ENCODE measurements at regions of chr15 and their contacts with region 1.

Region 1: DNA sequence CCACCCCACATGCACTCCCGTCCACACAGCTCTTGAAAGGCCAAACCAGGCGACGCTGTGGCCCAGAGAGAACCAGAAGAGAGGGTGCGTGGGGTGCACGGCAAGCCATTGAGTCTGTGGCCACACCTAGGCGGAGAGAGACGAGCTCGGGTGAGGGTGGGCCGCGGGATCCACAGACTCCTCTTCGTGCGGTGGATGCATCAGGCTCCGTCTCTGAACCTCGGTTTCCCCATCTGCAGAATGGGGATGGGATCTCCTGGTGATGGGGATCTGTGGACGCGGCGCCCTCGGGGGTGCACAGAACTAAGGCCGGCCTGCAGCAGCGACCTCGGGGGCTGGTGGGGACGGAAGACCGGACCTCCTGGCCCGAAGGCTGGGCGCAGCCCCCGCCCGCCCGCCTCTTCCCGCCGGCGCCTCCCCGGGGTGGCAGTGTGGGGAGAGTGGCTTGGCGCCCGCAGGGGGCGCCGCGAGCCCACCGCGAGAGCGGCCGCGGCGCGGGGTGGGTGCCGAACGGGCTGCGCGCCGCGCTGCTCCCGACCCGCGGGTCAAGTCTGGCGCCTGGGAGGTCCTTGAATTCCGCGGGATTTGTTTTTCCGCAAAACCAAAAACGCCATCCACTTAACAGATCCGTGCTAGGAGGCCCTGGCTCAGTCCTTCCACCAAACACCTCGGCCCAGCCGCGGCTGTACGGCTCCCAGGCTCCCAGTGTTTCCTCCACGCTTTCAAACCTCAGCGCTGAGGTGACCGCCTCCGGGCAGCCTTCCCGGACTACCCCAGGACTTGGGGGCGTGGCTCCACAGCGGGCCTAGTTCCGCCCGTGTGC is 13.2 kb upstream of the ADPGK start:
- DNase-seq: peak in 7 of 9 donors; percentile 12 to 44 (median 25)
- ATAC-seq: peak; percentile 84
- H3K4me3 ChIP-seq: peak overlapping the region; percentile 61
- H3K4me3 Mint-ChIP-seq: peak overlapping the region; percentile 75 to 90 (median 81)
- H3K27ac ChIP-seq: no peak overlapping the region
- H3K27ac Mint-ChIP-seq: peak overlapping the region in 3 of 9 donors; percentile 46 to 81 (median 67)
- H3K4me1 ChIP-seq: peaks cover 0 to 8% of the 10 kb centered on the region in 2 donors
- H3K4me1 Mint-ChIP-seq: peaks cover 0 to 14% (median 10%) of the 10 kb centered on the region in 7 donors
- H3K27me3 ChIP-seq: no peaks in the 10 kb centered on the region
- H3K27me3 Mint-ChIP-seq: peaks cover 32 to 38% (median 35%) of the 10 kb centered on the region in 5 donors

Region 2: GRCh38 chr15:72732086-72732485 is 64.6 kb before region 1 on chr15:
- CTCF ChIA-PET with region 1: no interaction called
- POLR2A ChIA-PET with region 1: no interaction called
- intact Hi-C with region 1: no loop called
- DNase-seq: no peak
- ATAC-seq: no peak
- H3K4me3 ChIP-seq: no peak overlapping the region
- H3K4me3 Mint-ChIP-seq: no peak overlapping the region
- H3K27ac ChIP-seq: no peak overlapping the region
- H3K27ac Mint-ChIP-seq: peak overlapping the region in 2 of 9 donors; percentile 3 to 65
- H3K4me1 ChIP-seq: no peaks in the 10 kb centered on the region
- H3K4me1 Mint-ChIP-seq: peaks cover 0 to 17% (median 7%) of the 10 kb centered on the region in 7 donors
- H3K27me3 ChIP-seq: no peaks in the 10 kb centered on the region
- H3K27me3 Mint-ChIP-seq: no peaks in the 10 kb centered on the region

Region 3: GRCh38 chr15:72961346-72961745 is 164.6 kb after region 1 on chr15:
- CTCF ChIA-PET with region 1: no interaction called
- POLR2A ChIA-PET with region 1: no interaction called
- intact Hi-C with region 1: no loop called
- DNase-seq: no peak
- ATAC-seq: no peak
- H3K4me3 ChIP-seq: no peak overlapping the region
- H3K4me3 Mint-ChIP-seq: no peak overlapping the region
- H3K27ac ChIP-seq: no peak overlapping the region
- H3K27ac Mint-ChIP-seq: no peak overlapping the region
- H3K4me1 ChIP-seq: peaks cover 0 to 9% of the 10 kb centered on the region in 2 donors
- H3K4me1 Mint-ChIP-seq: peaks cover 0 to 26% (median 0%) of the 10 kb centered on the region in 7 donors
- H3K27me3 ChIP-seq: no peaks in the 10 kb centered on the region
- H3K27me3 Mint-ChIP-seq: peaks cover 9 to 22% (median 19%) of the 10 kb centered on the region in 5 donors

Region 4: DNA sequence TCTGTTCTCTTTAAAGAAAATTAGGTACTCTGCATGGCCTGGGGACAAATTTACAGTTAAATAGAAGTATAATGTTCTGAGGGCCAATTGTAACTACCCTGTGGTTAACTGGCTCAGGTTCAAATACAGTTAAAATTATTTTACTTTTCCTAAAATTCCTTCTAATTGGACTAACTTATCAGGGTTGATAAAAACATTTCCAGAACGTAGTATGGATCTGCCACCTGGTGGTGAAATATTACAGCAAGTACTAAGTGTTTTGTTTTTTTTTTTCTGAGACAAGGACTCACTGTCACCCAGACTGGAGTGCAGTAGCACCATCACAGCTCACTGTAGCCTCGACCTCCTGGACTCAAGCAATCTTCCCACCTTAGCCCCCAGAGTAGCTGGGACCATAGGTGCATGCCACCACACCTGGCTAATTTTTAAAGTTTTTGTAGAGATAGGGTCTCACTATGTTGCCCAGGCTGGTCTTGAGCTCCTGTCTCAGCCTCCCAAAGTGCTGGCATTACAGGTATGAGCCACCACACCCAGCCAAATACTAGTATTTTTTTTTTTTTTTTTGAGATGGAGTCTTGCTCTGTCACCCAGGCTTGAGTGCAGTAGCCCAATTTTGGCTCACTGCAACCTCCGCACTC is 284.7 kb after region 1 on chr15:
- CTCF ChIA-PET with region 1: no interaction called
- POLR2A ChIA-PET with region 1: no interaction called
- intact Hi-C with region 1: loop called (anchors 1 kb)
- DNase-seq: peak in 7 of 9 donors; percentile 16 to 56 (median 38)
- ATAC-seq: peak; percentile 63
- H3K4me3 ChIP-seq: no peak overlapping the region
- H3K4me3 Mint-ChIP-seq: no peak overlapping the region
- H3K27ac ChIP-seq: no peak overlapping the region
- H3K27ac Mint-ChIP-seq: no peak overlapping the region
- H3K4me1 ChIP-seq: no peaks in the 10 kb centered on the region
- H3K4me1 Mint-ChIP-seq: peaks cover 0 to 3% (median 0%) of the 10 kb centered on the region in 7 donors
- H3K27me3 ChIP-seq: no peaks in the 10 kb centered on the region
- H3K27me3 Mint-ChIP-seq: peaks cover 0 to 7% (median 0%) of the 10 kb centered on the region in 5 donors

Region 5: GRCh38 chr15:73273181-73274002 is 476.7 kb after region 1 on chr15:
- CTCF ChIA-PET with region 1: no interaction called
- POLR2A ChIA-PET with region 1: no interaction called
- intact Hi-C with region 1: loop called in 1 of 2 experiments (anchors 2 kb)
- DNase-seq: peak in 7 of 9 donors; percentile 3 to 44 (median 32)
- ATAC-seq: peak; percentile 71
- H3K4me3 ChIP-seq: no peak overlapping the region
- H3K4me3 Mint-ChIP-seq: peak overlapping the region in 4 of 10 donors; percentile 4 to 63 (median 26)
- H3K27ac ChIP-seq: no peak overlapping the region
- H3K27ac Mint-ChIP-seq: no peak overlapping the region
- H3K4me1 ChIP-seq: no peaks in the 10 kb centered on the region
- H3K4me1 Mint-ChIP-seq: peaks cover 0 to 4% (median 0%) of the 10 kb centered on the region in 7 donors
- H3K27me3 ChIP-seq: no peaks in the 10 kb centered on the region
- H3K27me3 Mint-ChIP-seq: no peaks in the 10 kb centered on the region

Measured in naive thymus-derived CD4-positive, alpha-beta T cell (primary cell).